ENCODE measurements at regions of chr1 and their contacts with region 1.

Region 1: DNA sequence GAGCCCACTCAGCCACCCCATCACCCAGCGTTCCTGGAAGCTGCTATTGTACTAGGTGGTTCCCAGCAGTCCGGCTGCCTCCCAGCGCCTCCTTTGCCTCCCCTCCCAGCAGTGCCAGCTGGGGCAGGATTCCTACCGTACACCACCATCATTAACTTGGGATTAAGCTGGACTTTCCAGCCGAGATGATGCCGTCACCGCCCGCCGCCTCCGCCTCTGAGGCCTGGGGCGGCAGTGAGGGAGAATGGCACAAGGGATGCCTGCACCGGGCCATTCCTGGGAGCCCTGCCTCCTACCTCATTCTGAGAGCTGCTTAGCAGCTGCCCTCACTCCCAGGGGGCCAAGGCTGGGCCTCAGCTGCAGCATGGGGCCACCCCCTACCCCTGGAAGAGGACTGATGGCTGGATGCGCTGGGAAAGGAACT is 13.2 kb downstream of the CNTN2 start:
- DNase-seq: no peak
- ATAC-seq: no peak
- H3K4me3 ChIP-seq: no peak overlapping the region
- H3K27ac ChIP-seq: no peak overlapping the region
- H3K4me1 ChIP-seq: no peaks in the 10 kb centered on the region
- H3K27me3 ChIP-seq: no peaks in the 10 kb centered on the region
- CTCF ChIP-seq: no peak

Region 2: GRCh38 chr1:204726478-204726877 is 329.7 kb before region 1 on chr1:
- intact Hi-C with region 1: no loop called
- DNase-seq: no peak
- ATAC-seq: no peak
- H3K4me3 ChIP-seq: no peak overlapping the region
- H3K27ac ChIP-seq: no peak overlapping the region
- H3K4me1 ChIP-seq: no peaks in the 10 kb centered on the region
- H3K27me3 ChIP-seq: peaks cover 0 to 5% (median 0%) of the 10 kb centered on the region in 3 donors
- CTCF ChIP-seq: no peak

Region 3: DNA sequence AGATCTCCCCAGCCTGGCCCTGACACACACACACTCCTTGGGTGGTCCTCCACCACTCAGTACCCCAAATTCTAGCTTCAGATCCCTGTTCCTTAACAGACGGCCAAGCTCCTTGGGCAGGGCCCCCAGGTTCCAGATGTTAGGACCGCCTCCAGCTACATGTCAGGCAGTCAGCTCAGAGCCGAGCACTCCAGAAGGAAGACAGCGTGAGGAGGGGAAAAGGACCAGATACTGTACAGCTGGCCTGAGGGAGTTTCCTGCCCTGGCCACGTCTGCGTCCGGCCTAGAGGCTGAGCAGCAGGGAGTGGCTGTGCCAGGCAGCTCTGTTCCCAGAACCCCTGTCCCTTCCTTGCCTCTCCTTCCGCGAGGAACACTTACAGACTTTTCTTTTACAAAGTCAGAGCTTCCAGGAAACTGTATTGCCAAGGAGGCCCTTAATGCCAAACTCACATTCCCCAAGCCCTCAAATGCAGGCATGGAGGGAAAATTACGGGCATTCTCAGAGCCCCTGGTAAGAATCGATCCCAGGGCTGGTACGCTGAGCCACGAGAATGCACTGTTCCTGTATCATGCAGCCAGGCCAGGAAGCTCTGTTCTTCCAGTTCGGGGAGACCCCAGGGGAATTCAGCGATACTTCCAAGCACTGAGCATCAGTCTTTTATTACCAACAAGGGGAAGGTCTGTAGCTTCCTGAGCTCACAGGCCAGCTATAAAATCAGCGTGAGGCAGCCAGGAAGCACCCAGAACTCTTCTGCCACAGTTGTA is 58.4 kb before region 1 on chr1:
- intact Hi-C with region 1: loop called (anchors 5 kb)
- DNase-seq: no peak
- ATAC-seq: no peak
- H3K4me3 ChIP-seq: no peak overlapping the region
- H3K27ac ChIP-seq: no peak overlapping the region
- H3K4me1 ChIP-seq: no peaks in the 10 kb centered on the region
- H3K27me3 ChIP-seq: no peaks in the 10 kb centered on the region
- CTCF ChIP-seq: no peak

Measured in psoas muscle (tissue), 8 donors.